SK-N-SH (cell line): ENCODE measurements at regions of chr14 and their contacts with region 1.

Region 1: DNA sequence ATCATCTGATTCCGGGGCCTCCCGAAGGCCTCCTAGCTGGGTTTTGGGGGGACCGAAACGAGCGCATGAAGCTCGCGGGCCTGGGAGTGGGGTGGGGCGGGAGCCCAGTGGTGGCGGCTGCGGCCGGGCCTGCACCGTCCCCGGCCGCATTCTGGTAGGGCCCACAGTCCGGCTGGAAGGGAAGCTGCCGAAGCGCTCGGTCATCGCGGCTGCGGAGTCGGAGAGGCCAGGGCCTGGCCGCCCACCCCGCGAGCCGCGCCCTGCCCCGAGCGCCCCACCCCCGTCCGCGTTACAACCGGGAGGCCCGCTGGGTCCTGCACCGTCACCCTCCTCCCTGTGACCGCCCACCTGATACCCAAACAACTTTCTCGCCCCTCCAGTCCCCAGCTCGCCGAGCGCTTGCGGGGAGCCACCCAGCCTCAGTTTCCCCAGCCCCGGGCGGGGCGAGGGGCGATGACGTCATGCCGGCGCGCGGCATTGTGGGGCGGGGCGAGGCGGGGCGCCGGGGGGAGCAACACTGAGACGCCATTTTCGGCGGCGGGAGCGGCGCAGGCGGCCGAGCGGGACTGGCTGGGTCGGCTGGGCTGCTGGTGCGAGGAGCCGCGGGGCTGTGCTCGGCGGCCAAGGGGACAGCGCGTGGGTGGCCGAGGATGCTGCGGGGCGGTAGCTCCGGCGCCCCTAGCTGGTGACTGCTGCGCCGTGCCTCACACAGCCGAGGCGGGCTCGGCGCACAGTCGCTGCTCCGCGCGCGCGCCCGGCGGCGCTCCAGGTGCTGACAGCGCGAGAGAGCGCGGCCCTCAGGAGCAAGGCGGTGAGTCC is at the start of gene KLC1:
- DNase-seq: peak; percentile 97
- H3K4me3 ChIP-seq: peak within 1 kb of the TSS; percentile 72 to 76
- H3K27ac ChIP-seq: peak within 1 kb of the TSS; percentile 87 to 93
- H3K4me1 ChIP-seq: peaks cover 13 to 21% of the 10 kb centered on the region in 2 experiments
- H3K27me3 ChIP-seq: no peaks in the 10 kb centered on the region
- CTCF ChIP-seq: no peak
- EP300 ChIP-seq: no peak; a peak in 1 of 4 replicates
- RAD21 ChIP-seq: no peak
- polyA plus RNA-seq, gene KLC1: 211 and 308 TPM in 2 replicates

Region 2: GRCh38 chr14:103606963-103607668 is 21.8 kb before region 1 on chr14:
- CTCF ChIA-PET with region 1: interaction called, 11 read pairs
- POLR2A ChIA-PET with region 1: no interaction called
- DNase-seq: peak; percentile 87
- H3K4me3 ChIP-seq: no peak overlapping the region
- H3K27ac ChIP-seq: no peak overlapping the region
- H3K4me1 ChIP-seq: peaks cover 10 to 11% of the 10 kb centered on the region in 2 experiments; a peak in 2 of 4 replicates
- H3K27me3 ChIP-seq: no peaks in the 10 kb centered on the region
- CTCF ChIP-seq: peak; percentile 42
- EP300 ChIP-seq: no peak
- RAD21 ChIP-seq: peak; percentile 54